Heart left ventricle (tissue), 16 donors: ENCODE measurements at regions of chr2 and their contacts with region 1.

Region 1: GRCh38 chr2:117943013-117943672 is 70.7 kb downstream of the CCDC93 start:
- DNase-seq: no peak
- ATAC-seq: no peak
- H3K4me3 ChIP-seq: no peak overlapping the region
- H3K27ac ChIP-seq: no peak overlapping the region
- H3K4me1 ChIP-seq: no peaks in the 10 kb centered on the region
- H3K27me3 ChIP-seq: no peaks in the 10 kb centered on the region
- CTCF ChIP-seq: no peak
- POLR2A ChIP-seq: no peak

Region 2: GRCh38 chr2:117997872-117998454 is 54.8 kb after region 1 on chr2:
- intact Hi-C with region 1: loop called in 1 of 10 experiments (anchors 10 kb)
- DNase-seq: no peak
- ATAC-seq: peak in 3 of 4 donors; percentile 52 to 85 (median 79)
- H3K4me3 ChIP-seq: no peak overlapping the region
- H3K27ac ChIP-seq: peak overlapping the region in 2 of 12 donors; percentile 0 to 6
- H3K4me1 ChIP-seq: peaks cover 0 to 24% (median 8%) of the 10 kb centered on the region in 12 donors
- H3K27me3 ChIP-seq: no peaks in the 10 kb centered on the region
- CTCF ChIP-seq: no peak
- POLR2A ChIP-seq: no peak